ENCODE measurements at regions of chr5 and their contacts with region 1.

Region 1: DNA sequence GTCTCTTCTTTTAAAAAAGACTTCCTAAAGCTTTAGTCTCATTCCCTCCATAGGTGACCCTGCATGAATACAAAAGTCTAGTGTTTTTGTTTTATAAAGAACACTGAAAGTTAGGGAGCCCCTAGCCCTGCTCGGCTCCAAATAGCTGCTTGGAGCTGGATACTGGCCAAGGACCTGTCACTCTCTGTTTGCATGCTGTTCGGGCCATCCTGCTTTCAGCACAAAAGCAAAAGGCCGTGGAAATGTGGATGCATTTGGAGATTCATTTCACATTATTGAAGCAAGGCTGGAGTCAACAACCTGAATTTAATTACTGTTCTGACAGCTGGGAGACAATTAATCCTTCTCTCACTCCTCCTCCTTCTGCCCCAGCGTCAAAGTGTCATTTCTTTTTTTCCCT is 151.7 kb upstream of the NMUR2 start:
- DNase-seq: no peak
- ATAC-seq: no peak
- H3K4me3 ChIP-seq: no peak overlapping the region
- H3K27ac ChIP-seq: no peak overlapping the region
- H3K4me1 ChIP-seq: no peaks in the 10 kb centered on the region
- H3K27me3 ChIP-seq: no peaks in the 10 kb centered on the region
- CTCF ChIP-seq: no peak

Region 2: DNA sequence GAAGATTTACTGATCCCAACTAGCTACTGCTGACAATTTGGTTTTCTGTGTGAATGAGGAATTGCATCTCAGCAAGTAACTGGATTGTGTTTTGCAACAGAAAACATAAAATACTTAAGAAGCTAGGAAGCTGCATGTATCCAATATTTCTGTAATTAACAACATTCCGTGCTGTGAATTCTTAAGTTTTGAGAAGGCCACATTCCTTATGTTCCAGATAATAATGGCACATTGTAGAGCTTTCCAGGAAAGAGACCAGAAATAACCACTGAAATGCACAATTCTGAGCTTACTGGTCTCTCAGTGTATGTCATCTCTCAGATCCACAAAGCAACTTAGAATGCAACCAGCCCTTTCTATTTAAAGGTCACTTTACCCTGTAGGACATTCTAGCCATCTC is 155.2 kb after region 1 on chr5:
- intact Hi-C with region 1: no loop called
- DNase-seq: no peak
- ATAC-seq: no peak
- H3K4me3 ChIP-seq: no peak overlapping the region
- H3K27ac ChIP-seq: no peak overlapping the region
- H3K4me1 ChIP-seq: no peaks in the 10 kb centered on the region
- H3K27me3 ChIP-seq: no peaks in the 10 kb centered on the region
- CTCF ChIP-seq: no peak

Region 3: GRCh38 chr5:153147891-153148623 is 591.3 kb after region 1 on chr5:
- intact Hi-C with region 1: loop called (anchors 10 kb)
- DNase-seq: no peak
- ATAC-seq: peak; percentile 66 to 69
- H3K4me3 ChIP-seq: no peak overlapping the region
- H3K27ac ChIP-seq: no peak overlapping the region
- H3K4me1 ChIP-seq: no peaks in the 10 kb centered on the region
- H3K27me3 ChIP-seq: no peaks in the 10 kb centered on the region
- CTCF ChIP-seq: peak; percentile 47

Measured in lower lobe of right lung (tissue), 2 donors.